CD14-positive monocyte (primary cell): ENCODE measurements at regions of chr12 and their contacts with region 1.

Region 1: DNA sequence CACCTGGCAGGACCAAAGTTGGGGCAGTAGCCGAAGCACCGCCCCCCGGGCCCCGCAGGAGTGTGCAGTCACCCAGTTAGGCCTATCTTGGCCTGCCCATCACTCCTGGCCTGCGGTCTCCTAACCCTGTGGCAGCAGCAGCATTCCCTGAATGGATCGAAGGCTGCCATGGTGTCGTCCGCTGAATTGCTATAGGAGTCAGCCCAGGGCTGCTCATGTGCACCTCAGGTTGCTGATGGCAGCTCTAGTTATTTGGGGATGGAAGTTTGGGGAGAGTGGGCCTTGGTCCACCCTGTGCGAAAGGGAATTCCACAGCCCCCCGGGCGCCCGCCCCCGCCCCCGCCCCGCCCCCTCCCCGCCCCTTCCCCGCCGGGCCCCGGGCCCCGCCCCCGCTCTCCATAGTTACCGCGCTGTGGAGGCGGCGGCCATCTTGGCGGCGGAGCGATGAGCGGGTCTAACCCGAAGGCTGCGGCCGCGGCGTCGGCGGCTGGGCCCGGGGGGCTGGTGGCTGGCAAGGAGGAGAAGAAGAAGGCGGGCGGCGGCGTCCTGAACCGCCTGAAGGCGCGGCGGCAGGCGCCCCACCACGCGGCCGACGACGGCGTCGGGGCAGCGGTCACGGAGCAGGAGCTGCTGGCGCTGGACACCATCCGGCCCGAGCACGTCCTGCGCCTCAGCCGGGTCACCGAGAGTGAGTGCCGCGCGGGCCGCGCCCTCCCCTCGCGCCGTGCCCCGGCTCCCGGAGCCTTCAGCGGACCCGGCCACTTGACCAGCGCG is at the start of gene UNC119B:
- DNase-seq: peak; percentile 20 to 35 (median 34)
- H3K4me3 ChIP-seq: peak within 1 kb of the TSS; percentile 66 to 84 (median 69)
- H3K4me3 Mint-ChIP-seq: peak within 1 kb of the TSS; percentile 87 to 90
- H3K27ac ChIP-seq: peak within 1 kb of the TSS in 1 of 2 donors; percentile 54
- H3K27ac Mint-ChIP-seq: peak within 1 kb of the TSS in 6 of 7 donors; percentile 31 to 87 (median 72)
- H3K4me1 ChIP-seq: peaks cover 21 to 22% of the 10 kb centered on the region in 2 donors
- H3K4me1 Mint-ChIP-seq: peaks cover 22% of the 10 kb centered on the region
- H3K27me3 ChIP-seq: no peaks in the 10 kb centered on the region
- H3K27me3 Mint-ChIP-seq: peaks cover 0 to 1% (median 0%) of the 10 kb centered on the region in 3 donors
- CTCF ChIP-seq: no peak
- polyA plus RNA-seq, gene UNC119B: 1.1 to 9.1 (median 2.1) TPM

Region 2: DNA sequence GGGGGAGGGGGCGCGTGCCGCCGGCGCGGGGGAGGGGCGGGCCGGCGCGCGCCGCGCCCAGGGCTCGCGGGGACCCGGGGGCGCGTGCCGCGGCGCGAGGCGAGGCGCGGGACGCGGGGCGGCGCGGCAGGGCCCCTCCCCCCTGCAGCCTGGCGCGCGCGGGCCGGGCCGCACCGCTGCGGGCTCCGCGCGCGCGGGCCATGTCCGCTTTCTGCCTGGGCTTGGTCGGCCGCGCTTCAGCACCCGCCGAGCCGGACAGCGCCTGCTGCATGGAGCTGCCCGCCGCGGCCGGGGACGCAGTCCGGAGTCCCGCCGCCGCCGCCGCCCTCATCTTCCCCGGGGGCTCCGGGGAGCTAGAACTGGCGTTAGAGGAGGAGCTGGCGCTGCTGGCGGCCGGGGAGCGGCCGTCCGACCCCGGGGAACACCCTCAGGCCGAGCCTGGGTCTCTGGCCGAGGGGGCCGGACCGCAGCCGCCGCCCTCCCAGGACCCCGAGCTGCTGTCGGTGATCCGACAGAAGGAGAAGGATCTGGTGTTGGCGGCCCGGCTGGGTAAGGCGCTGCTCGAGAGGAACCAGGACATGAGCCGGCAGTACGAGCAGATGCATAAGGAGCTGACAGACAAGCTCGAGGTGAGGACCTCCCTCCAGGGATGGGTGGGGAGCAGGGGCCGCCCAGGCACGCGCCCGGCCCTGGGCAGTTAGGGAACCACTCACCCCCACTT is 720.4 kb before region 1 on chr12:
- intact Hi-C with region 1: no loop called
- DNase-seq: peak; percentile 34 to 48 (median 41)
- H3K4me3 ChIP-seq: peak overlapping the region in 1 of 3 experiments; percentile 75
- H3K4me3 Mint-ChIP-seq: peak overlapping the region; percentile 48 to 82
- H3K27ac ChIP-seq: no peak overlapping the region
- H3K27ac Mint-ChIP-seq: peak overlapping the region in 1 of 7 donors; percentile 38
- H3K4me1 ChIP-seq: peaks cover 9 to 20% of the 10 kb centered on the region in 2 donors
- H3K4me1 Mint-ChIP-seq: peaks cover 6% of the 10 kb centered on the region
- H3K27me3 ChIP-seq: peaks cover 42 to 51% of the 10 kb centered on the region in 2 donors
- H3K27me3 Mint-ChIP-seq: peaks cover 41 to 64% (median 57%) of the 10 kb centered on the region in 3 donors
- CTCF ChIP-seq: no peak

Region 3: GRCh38 chr12:120677765-120678473 is 32.3 kb before region 1 on chr12:
- intact Hi-C with region 1: loop called (anchors 5 kb)
- DNase-seq: peak; percentile 69 to 74 (median 70)
- H3K4me3 ChIP-seq: no peak overlapping the region
- H3K4me3 Mint-ChIP-seq: no peak overlapping the region
- H3K27ac ChIP-seq: peak overlapping the region in 1 of 2 donors; percentile 72
- H3K27ac Mint-ChIP-seq: peak overlapping the region in 6 of 7 donors; percentile 46 to 86 (median 83)
- H3K4me1 ChIP-seq: peaks cover 33 to 50% of the 10 kb centered on the region in 2 donors
- H3K4me1 Mint-ChIP-seq: peaks cover 35% of the 10 kb centered on the region
- H3K27me3 ChIP-seq: no peaks in the 10 kb centered on the region
- H3K27me3 Mint-ChIP-seq: peaks cover 0 to 6% (median 0%) of the 10 kb centered on the region in 3 donors
- CTCF ChIP-seq: no peak

Region 4: GRCh38 chr12:120886199-120887018 is 176.2 kb after region 1 on chr12:
- intact Hi-C with region 1: no loop called
- DNase-seq: no peak
- H3K4me3 ChIP-seq: no peak overlapping the region
- H3K4me3 Mint-ChIP-seq: peak overlapping the region; percentile 2 to 15
- H3K27ac ChIP-seq: peak overlapping the region in 1 of 2 donors; percentile 68
- H3K27ac Mint-ChIP-seq: peak overlapping the region in 6 of 7 donors; percentile 4 to 52 (median 48)
- H3K4me1 ChIP-seq: peaks cover 23 to 39% of the 10 kb centered on the region in 2 donors
- H3K4me1 Mint-ChIP-seq: peaks cover 53% of the 10 kb centered on the region
- H3K27me3 ChIP-seq: no peaks in the 10 kb centered on the region
- H3K27me3 Mint-ChIP-seq: peaks cover 0 to 1% (median 0%) of the 10 kb centered on the region in 3 donors
- CTCF ChIP-seq: no peak